ENCODE measurements at regions of chr5 and their contacts with region 1.

Region 1: GRCh38 chr5:83718195-83718825 is 2.3 kb downstream of the HAPLN1 start:
- DNase-seq: peak; percentile 21
- H3K4me3 ChIP-seq: no peak overlapping the region; the same call in 1 of the 2 replicates
- CTCF ChIP-seq: peak; percentile 62

Region 2: DNA sequence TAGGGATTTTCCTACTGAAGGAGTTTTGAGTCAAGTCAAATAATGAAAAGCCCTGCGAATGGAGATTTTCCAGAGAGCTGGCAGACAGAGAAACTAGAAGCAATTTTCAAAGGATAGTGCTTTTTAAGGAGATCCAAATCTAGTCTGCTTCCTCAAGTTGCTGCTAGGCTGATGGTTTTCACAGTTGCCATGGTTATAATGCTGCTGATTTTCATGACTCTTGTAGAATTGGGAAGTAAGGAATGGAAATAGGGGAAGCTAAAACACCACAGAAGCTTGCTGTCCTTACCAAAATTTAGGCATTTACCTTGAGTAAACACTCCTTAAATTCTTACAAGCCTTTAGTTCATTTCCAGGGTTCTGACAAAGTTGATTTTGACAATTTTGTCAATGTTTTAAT is 32.4 kb after region 1 on chr5:
- CTCF ChIA-PET with region 1: no interaction called
- POLR2A ChIA-PET with region 1: no interaction called
- DNase-seq: no peak
- H3K4me3 ChIP-seq: no peak overlapping the region
- CTCF ChIP-seq: no peak

Region 3: GRCh38 chr5:84255315-84255714 is 537.0 kb after region 1 on chr5:
- CTCF ChIA-PET with region 1: interaction called, 16 read pairs
- POLR2A ChIA-PET with region 1: no interaction called
- DNase-seq: no peak
- H3K4me3 ChIP-seq: no peak overlapping the region
- CTCF ChIP-seq: peak; percentile 26

Region 4: GRCh38 chr5:84379749-84380148 is 661.4 kb after region 1 on chr5:
- CTCF ChIA-PET with region 1: interaction called, 19 read pairs
- POLR2A ChIA-PET with region 1: interaction called, 4 read pairs
- DNase-seq: no peak
- H3K4me3 ChIP-seq: no peak overlapping the region
- CTCF ChIP-seq: peak; percentile 29

Region 5: DNA sequence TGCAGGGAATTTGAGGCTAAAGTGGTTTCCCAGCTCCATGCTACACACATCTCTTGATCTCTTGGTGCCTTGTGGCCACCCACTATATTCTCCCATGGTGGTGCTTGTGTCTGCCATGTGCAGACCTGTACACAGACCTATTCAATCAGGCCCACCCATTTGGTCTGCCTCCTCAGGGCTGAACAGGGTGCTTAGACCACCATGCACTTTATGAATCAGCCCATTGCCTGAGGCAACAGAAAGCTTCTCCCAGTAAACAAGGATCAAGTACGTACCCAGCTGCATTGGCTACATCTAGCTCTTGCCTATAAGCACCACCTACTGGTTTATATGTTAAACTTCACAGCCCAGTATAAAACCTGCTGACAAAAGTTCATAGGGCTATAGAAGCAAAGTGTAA is 1330.7 kb after region 1 on chr5:
- CTCF ChIA-PET with region 1: interaction called, 21 read pairs
- POLR2A ChIA-PET with region 1: no interaction called
- DNase-seq: peak; percentile 29
- H3K4me3 ChIP-seq: no peak overlapping the region
- CTCF ChIP-seq: peak; percentile 31